Activated T-helper 2 cell treated with anti-CD3 and anti-CD28 coated beads, Interferon-gamma antibody, Interleukin-2, Interleukin-4, amounts not matched to agents 10 μg/mL and 5 μg/mL and 100 μg/mL, durations not matched to agents 14 hours and 24 hours and 36 hours (primary cell): ENCODE measurements at regions of chr20 and their contacts with region 1.

Region 1: DNA sequence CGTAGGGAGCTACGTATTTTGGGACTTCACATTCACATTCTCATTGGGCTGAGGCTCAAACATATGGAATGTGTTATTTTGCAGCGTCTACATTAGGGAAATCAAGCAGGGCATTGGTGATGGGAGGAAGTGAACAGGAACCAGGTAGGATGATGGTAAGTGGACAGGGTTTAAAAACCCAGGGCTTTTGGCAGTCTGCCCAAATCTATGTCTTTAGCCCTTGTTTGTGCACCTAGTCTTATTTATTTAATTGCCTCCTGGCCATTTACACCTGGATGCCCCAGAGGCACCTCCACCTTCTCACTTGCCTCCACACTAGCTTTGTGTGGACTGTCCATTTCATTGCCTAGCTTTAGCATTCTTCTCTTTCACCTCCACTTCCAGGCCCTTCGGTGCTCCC is 23.4 kb upstream of the C20orf144 start:
- DNase-seq: no peak
- H3K4me3 Mint-ChIP-seq: no peak overlapping the region
- H3K27ac Mint-ChIP-seq: no peak overlapping the region
- H3K4me1 Mint-ChIP-seq: peaks cover 2% of the 10 kb centered on the region
- H3K27me3 Mint-ChIP-seq: no peaks in the 10 kb centered on the region

Region 2: GRCh38 chr20:32839227-32839981 is 799.3 kb before region 1 on chr20:
- intact Hi-C with region 1: no loop called
- DNase-seq: no peak
- H3K4me3 Mint-ChIP-seq: no peak overlapping the region
- H3K27ac Mint-ChIP-seq: peak overlapping the region; percentile 24
- H3K4me1 Mint-ChIP-seq: peaks cover 18% of the 10 kb centered on the region
- H3K27me3 Mint-ChIP-seq: no peaks in the 10 kb centered on the region

Region 3: GRCh38 chr20:33653218-33653899 is 14.6 kb after region 1 on chr20:
- intact Hi-C with region 1: loop called (anchors 1 kb)
- DNase-seq: no peak
- H3K4me3 Mint-ChIP-seq: no peak overlapping the region
- H3K27ac Mint-ChIP-seq: no peak overlapping the region
- H3K4me1 Mint-ChIP-seq: peaks cover 22% of the 10 kb centered on the region
- H3K27me3 Mint-ChIP-seq: no peaks in the 10 kb centered on the region

Region 4: GRCh38 chr20:33674295-33675135 is 35.8 kb after region 1 on chr20 and contains the start of gene NECAB3:
- intact Hi-C with region 1: no loop called
- DNase-seq: peak; percentile 65
- H3K4me3 Mint-ChIP-seq: peak within 1 kb of the TSS; percentile 85
- H3K27ac Mint-ChIP-seq: peak within 1 kb of the TSS; percentile 75
- H3K4me1 Mint-ChIP-seq: peaks cover 31% of the 10 kb centered on the region
- H3K27me3 Mint-ChIP-seq: no peaks in the 10 kb centered on the region
- total RNA-seq, gene NECAB3: 27.0 and 30.1 TPM in 2 replicates

Region 5: GRCh38 chr20:35529552-35529951 is 1890.8 kb after region 1 on chr20 and contains the start of gene C20orf173:
- intact Hi-C with region 1: no loop called
- DNase-seq: no peak
- H3K4me3 Mint-ChIP-seq: no peak within 1 kb of the TSS
- H3K27ac Mint-ChIP-seq: no peak within 1 kb of the TSS
- H3K4me1 Mint-ChIP-seq: no peaks in the 10 kb centered on the region
- H3K27me3 Mint-ChIP-seq: no peaks in the 10 kb centered on the region
- total RNA-seq, gene C20orf173: not detected in 2 replicates